MCF 10A (cell line): ENCODE measurements at regions of chr9 and their contacts with region 1.

Region 1: GRCh38 chr9:74773886-74774479 is 113.7 kb downstream of the TRPM6 start:
- DNase-seq: peak; percentile 85
- H3K4me3 Mint-ChIP-seq: no peak overlapping the region
- H3K27ac Mint-ChIP-seq: no peak overlapping the region
- H3K4me1 Mint-ChIP-seq: no peaks in the 10 kb centered on the region
- H3K27me3 Mint-ChIP-seq: peaks cover 3% of the 10 kb centered on the region
- CTCF ChIP-seq: peak; percentile 76

Region 2: GRCh38 chr9:74795803-74796202 is 21.8 kb after region 1 on chr9:
- CTCF ChIA-PET with region 1: interaction called, 14 read pairs
- POLR2A ChIA-PET with region 1: no interaction called
- intact Hi-C with region 1: no loop called
- DNase-seq: no peak
- H3K4me3 Mint-ChIP-seq: no peak overlapping the region
- H3K27ac Mint-ChIP-seq: no peak overlapping the region
- H3K4me1 Mint-ChIP-seq: no peaks in the 10 kb centered on the region
- H3K27me3 Mint-ChIP-seq: no peaks in the 10 kb centered on the region
- CTCF ChIP-seq: no peak

Region 3: GRCh38 chr9:74920944-74921626 is 147.1 kb after region 1 on chr9:
- CTCF ChIA-PET with region 1: interaction called, 11 read pairs
- POLR2A ChIA-PET with region 1: no interaction called
- intact Hi-C with region 1: no loop called
- DNase-seq: peak; percentile 10
- H3K4me3 Mint-ChIP-seq: no peak overlapping the region
- H3K27ac Mint-ChIP-seq: no peak overlapping the region
- H3K4me1 Mint-ChIP-seq: peaks cover 10% of the 10 kb centered on the region
- H3K27me3 Mint-ChIP-seq: no peaks in the 10 kb centered on the region
- CTCF ChIP-seq: no peak

Region 4: GRCh38 chr9:75001719-75002422 is 227.9 kb after region 1 on chr9:
- CTCF ChIA-PET with region 1: interaction called, 433 read pairs
- POLR2A ChIA-PET with region 1: interaction called, 7 read pairs
- intact Hi-C with region 1: loop called (anchors 1 kb)
- DNase-seq: peak; percentile 82
- H3K4me3 Mint-ChIP-seq: no peak overlapping the region
- H3K27ac Mint-ChIP-seq: no peak overlapping the region
- H3K4me1 Mint-ChIP-seq: no peaks in the 10 kb centered on the region
- H3K27me3 Mint-ChIP-seq: no peaks in the 10 kb centered on the region
- CTCF ChIP-seq: peak; percentile 68

Region 5: DNA sequence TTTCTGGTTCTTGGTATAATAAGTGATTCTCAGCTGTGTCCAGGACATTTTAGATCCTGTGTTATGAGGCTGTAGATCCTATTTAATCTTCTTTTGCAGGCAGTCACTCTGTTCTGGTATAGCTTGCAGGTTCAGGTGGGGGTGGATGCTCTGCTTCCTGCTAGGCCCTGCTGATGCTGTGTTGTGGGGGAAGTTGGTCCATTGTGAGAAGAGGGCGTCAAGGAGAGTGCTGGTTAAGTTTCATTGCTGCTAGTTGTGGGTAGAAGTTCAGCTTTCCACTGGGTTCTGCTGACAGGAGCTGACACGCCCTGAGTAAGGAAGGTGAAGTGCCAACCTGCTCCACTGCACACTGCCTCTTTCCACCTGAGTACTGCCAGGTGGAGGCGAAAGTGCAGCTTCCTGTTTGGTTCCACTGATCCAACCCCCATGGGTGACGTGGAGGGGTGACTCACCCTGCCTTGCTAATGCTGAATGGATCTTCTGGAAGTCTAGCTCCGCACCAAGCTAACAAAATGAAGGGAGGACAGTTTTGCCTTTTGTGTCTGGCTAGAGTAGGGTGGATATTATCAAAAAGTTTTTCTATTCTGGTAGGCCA is 297.6 kb after region 1 on chr9:
- CTCF ChIA-PET with region 1: interaction called, 113 read pairs
- POLR2A ChIA-PET with region 1: interaction called, 4 read pairs
- intact Hi-C with region 1: no loop called
- DNase-seq: peak; percentile 81
- H3K4me3 Mint-ChIP-seq: no peak overlapping the region
- H3K27ac Mint-ChIP-seq: peak overlapping the region; percentile 77
- H3K4me1 Mint-ChIP-seq: peaks cover 13% of the 10 kb centered on the region
- H3K27me3 Mint-ChIP-seq: no peaks in the 10 kb centered on the region
- CTCF ChIP-seq: no peak

Region 6: DNA sequence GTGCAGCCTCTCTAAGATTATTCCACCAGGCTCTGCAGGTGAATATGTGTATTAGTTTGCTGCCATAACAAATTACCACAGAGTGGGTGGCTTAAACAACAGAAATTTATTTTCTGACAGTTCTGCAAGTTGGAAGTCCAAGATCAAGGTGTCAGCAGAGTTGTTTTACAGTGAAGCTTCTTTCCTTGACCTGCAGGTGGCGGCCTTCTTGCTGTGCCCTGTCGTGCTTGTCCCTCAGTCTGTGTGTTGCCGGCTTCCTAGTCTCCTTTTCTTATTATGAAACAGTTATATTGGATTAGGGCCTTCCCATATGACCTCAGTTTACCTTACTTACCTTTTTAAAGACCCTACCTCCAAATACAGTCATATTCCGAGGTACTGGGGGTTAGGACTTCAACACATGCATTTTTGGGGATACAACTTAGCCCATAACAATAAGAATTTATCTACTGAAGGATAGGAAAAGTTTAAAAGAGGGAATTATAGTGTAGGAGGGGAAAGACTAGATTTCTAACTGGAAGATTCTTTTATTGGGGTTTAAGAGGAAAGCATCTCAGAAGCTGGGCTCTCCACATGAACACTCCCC is 411.7 kb after region 1 on chr9:
- CTCF ChIA-PET with region 1: interaction called, 3 read pairs
- POLR2A ChIA-PET with region 1: no interaction called
- intact Hi-C with region 1: loop called (anchors 5 kb)
- DNase-seq: peak; percentile 64
- H3K4me3 Mint-ChIP-seq: no peak overlapping the region
- H3K27ac Mint-ChIP-seq: no peak overlapping the region
- H3K4me1 Mint-ChIP-seq: peaks cover 5% of the 10 kb centered on the region
- H3K27me3 Mint-ChIP-seq: no peaks in the 10 kb centered on the region
- CTCF ChIP-seq: peak; percentile 54